ENCODE measurements at regions of chr17 and their contacts with region 1.

Region 1: GRCh38 chr17:5419959-5420653 is at the start of gene RPAIN:
- DNase-seq: peak; percentile 81
- H3K4me3 Mint-ChIP-seq: peak within 1 kb of the TSS; percentile 84
- H3K27ac Mint-ChIP-seq: peak within 1 kb of the TSS; percentile 83
- H3K4me1 Mint-ChIP-seq: peaks cover 12% of the 10 kb centered on the region
- H3K27me3 Mint-ChIP-seq: no peaks in the 10 kb centered on the region
- CTCF ChIP-seq: no peak
- total RNA-seq, gene RPAIN: 36.7 and 42.0 TPM in 2 replicates

Region 2: GRCh38 chr17:5405400-5405799 is 14.7 kb before region 1 on chr17:
- CTCF ChIA-PET with region 1: no interaction called
- intact Hi-C with region 1: no loop called
- DNase-seq: no peak
- H3K4me3 Mint-ChIP-seq: no peak overlapping the region
- H3K27ac Mint-ChIP-seq: no peak overlapping the region
- H3K4me1 Mint-ChIP-seq: peaks cover under 1% of the 10 kb centered on the region
- H3K27me3 Mint-ChIP-seq: no peaks in the 10 kb centered on the region
- CTCF ChIP-seq: no peak

Region 3: DNA sequence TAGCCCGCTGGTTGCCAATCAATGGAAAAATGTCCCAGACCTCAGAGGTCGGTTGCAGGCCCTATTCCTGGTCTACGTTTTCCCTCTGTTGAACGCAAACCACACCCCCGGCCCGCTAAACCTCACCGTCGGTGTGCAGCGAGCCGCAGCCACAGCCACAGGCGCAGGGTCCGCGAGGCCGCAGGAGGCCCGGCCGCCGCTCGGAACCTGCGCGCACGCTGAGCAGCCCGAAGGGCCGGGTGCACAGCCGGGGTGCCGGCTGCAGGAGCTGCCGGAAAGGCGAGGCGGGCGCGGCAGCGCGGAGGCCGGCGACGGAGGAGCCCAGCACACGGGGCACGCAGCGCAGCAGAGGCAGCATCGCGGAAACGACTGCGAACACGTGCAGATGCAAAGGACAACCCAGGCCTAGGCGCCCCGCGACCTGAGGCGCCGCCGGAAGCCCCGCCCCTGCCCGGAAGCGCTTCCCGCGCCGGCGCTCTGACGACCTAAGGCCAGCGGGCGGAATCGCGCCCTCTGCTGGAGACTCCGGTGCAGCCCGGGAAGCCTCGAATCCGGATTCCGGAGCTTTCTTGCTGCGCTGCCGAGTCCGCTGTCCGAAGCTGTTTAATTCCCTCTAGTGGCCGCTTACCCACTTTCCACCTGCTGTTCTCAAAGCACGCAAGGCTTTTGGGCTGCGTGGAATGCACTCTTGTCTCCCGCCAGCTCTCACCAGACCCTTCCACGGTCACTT is 18.8 kb after region 1 on chr17 and contains the start of gene C1QBP:
- CTCF ChIA-PET with region 1: interaction called, 10 read pairs
- intact Hi-C with region 1: no loop called
- DNase-seq: peak; percentile 90
- H3K4me3 Mint-ChIP-seq: peak within 1 kb of the TSS; percentile 72
- H3K27ac Mint-ChIP-seq: peak within 1 kb of the TSS; percentile 66
- H3K4me1 Mint-ChIP-seq: no peaks in the 10 kb centered on the region
- H3K27me3 Mint-ChIP-seq: no peaks in the 10 kb centered on the region
- CTCF ChIP-seq: peak; percentile 90
- total RNA-seq, gene C1QBP: 124 and 128 TPM in 2 replicates

Region 4: GRCh38 chr17:5486204-5487124 is 66.4 kb after region 1 on chr17 and contains the start of gene MIS12:
- CTCF ChIA-PET with region 1: no interaction called
- intact Hi-C with region 1: no loop called
- DNase-seq: peak; percentile 90
- H3K4me3 Mint-ChIP-seq: peak within 1 kb of the TSS; percentile 88
- H3K27ac Mint-ChIP-seq: peak within 1 kb of the TSS; percentile 92
- H3K4me1 Mint-ChIP-seq: peaks cover 7% of the 10 kb centered on the region
- H3K27me3 Mint-ChIP-seq: no peaks in the 10 kb centered on the region
- CTCF ChIP-seq: no peak
- total RNA-seq, gene MIS12: 13.6 and 15.9 TPM in 2 replicates

Region 5: GRCh38 chr17:6823011-6823442 is 1402.9 kb after region 1 on chr17:
- CTCF ChIA-PET with region 1: interaction called, 10 read pairs
- intact Hi-C with region 1: no loop called
- DNase-seq: no peak
- H3K4me3 Mint-ChIP-seq: no peak overlapping the region
- H3K27ac Mint-ChIP-seq: no peak overlapping the region
- H3K4me1 Mint-ChIP-seq: peaks cover 9% of the 10 kb centered on the region
- H3K27me3 Mint-ChIP-seq: peaks cover 20% of the 10 kb centered on the region
- CTCF ChIP-seq: no peak

Measured in Calu3 (cell line).